A549 (cell line): ENCODE measurements at regions of chr19 and their contacts with region 1.

Region 1: DNA sequence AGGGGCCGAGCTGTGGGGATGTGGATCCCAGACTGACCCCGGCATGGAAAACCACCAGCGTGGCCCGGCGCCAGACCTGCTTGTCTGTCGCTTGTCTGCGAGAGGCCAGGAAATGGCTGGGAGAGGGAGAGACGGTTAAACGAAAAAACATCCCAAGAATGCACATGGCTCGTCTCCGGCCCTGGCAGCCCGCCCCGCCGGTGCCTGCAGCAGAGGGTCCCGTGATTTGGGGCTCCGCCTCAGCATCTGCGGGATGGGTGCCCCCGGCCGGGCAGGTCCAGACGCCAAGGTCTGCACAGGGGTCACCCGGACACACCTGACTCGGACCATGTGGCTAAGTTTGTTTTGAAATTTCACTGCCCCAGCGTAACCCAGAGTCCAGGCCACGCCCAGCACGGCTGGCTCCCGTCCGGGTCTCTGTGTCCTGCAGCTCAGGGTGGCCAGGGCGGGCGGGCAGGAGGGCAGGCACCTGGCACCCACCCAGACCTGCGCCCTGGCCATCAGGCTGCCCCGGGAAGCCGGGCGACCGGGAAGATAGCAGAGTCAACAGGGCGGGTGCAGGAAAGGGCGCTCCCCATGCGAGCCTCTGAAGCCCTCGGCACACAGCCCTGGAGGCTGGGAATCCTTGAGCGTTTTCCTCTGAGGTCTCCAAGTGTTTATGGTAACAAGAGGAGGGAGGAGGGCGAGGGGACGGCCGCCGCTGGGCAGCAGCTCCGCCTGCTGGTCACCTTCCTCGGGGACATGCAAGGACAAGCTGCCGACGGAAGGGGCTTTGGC is 103.2 kb downstream of the GADD45B start:
- DNase-seq: peak; percentile 74 to 94
- ATAC-seq: peak; percentile 88 to 92
- H3K4me3 ChIP-seq: peak overlapping the region; percentile 35
- H3K27ac ChIP-seq: peak overlapping the region; percentile 96
- H3K4me1 ChIP-seq: peaks cover 35% of the 10 kb centered on the region
- CTCF ChIP-seq: peak; percentile 82
- EP300 ChIP-seq: peak; percentile 27 to 69; a peak in 3 of 5 replicates
- POLR2A ChIP-seq: no peak
- RAD21 ChIP-seq: peak; percentile 91 to 93

Region 2: DNA sequence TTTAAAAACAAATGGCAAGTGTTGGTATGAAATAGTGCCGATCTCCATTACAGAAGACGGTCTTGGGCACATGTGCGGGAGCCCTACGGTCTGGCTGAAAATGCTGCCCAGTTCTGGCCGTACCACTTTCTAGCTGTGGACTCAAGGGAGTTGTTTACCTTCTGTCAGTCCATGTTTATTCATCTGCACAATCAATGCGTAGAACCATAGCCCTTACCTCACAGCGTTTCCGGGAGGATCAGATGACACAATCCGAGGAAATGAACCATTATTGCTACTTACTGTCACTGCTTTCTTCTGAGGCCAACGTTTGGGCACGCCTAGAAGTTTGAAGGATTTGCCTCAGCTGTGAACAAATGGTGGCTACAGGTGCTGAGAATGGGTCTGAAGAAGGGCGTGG is 72.0 kb before region 1 on chr19:
- CTCF ChIA-PET with region 1: interaction called, 10 read pairs
- POLR2A ChIA-PET with region 1: interaction called, 6 read pairs
- DNase-seq: peak; percentile 52 to 95
- ATAC-seq: peak; percentile 90 to 92
- H3K4me3 ChIP-seq: 0 out of 3 replicates have a peak overlapping the region, but pooled peaks have one; percentile 10
- H3K27ac ChIP-seq: peak overlapping the region; percentile 78 to 87
- H3K4me1 ChIP-seq: peaks cover 30% of the 10 kb centered on the region
- CTCF ChIP-seq: no peak
- EP300 ChIP-seq: peak; percentile 52 to 71; a peak in 2 of 5 replicates
- POLR2A ChIP-seq: no peak
- RAD21 ChIP-seq: no peak

Region 3: GRCh38 chr19:2537584-2538433 is 41.3 kb before region 1 on chr19:
- CTCF ChIA-PET with region 1: interaction called, 47 read pairs
- POLR2A ChIA-PET with region 1: interaction called, 35 read pairs
- DNase-seq: no peak
- ATAC-seq: no peak
- H3K4me3 ChIP-seq: no peak overlapping the region
- H3K27ac ChIP-seq: peak overlapping the region; percentile 40 to 97
- H3K4me1 ChIP-seq: peaks cover 62% of the 10 kb centered on the region
- CTCF ChIP-seq: no peak
- EP300 ChIP-seq: no peak
- POLR2A ChIP-seq: no peak
- RAD21 ChIP-seq: no peak

Region 4: DNA sequence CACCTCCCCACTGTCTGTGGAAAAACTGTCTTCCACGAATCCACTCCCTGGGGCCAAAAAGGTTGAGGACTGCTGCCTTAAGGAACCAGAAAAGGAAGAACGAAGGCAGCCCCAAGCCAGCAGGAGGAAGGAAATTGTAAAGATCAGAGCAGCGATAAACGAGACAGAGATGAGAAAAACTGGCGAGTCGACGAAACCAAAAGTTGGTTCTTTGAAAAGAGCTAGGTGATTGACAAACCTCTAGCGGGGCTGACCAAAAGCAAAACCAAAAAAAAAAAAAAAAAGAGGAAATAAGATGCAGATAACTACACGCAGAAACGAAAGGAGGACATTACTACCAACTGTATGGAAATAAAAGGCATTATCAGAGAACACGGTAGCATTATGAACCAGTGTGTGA is 26.2 kb before region 1 on chr19:
- CTCF ChIA-PET with region 1: interaction called, 11 read pairs
- POLR2A ChIA-PET with region 1: interaction called, 3 read pairs
- DNase-seq: no peak
- ATAC-seq: peak in 1 of 2 experiments; percentile 19; a peak in 2 of 6 replicates
- H3K4me3 ChIP-seq: peak overlapping the region; percentile 35
- H3K27ac ChIP-seq: peak overlapping the region; percentile 76 to 84
- H3K4me1 ChIP-seq: peaks cover 21% of the 10 kb centered on the region
- CTCF ChIP-seq: no peak
- EP300 ChIP-seq: no peak
- POLR2A ChIP-seq: no peak
- RAD21 ChIP-seq: no peak

Region 5: DNA sequence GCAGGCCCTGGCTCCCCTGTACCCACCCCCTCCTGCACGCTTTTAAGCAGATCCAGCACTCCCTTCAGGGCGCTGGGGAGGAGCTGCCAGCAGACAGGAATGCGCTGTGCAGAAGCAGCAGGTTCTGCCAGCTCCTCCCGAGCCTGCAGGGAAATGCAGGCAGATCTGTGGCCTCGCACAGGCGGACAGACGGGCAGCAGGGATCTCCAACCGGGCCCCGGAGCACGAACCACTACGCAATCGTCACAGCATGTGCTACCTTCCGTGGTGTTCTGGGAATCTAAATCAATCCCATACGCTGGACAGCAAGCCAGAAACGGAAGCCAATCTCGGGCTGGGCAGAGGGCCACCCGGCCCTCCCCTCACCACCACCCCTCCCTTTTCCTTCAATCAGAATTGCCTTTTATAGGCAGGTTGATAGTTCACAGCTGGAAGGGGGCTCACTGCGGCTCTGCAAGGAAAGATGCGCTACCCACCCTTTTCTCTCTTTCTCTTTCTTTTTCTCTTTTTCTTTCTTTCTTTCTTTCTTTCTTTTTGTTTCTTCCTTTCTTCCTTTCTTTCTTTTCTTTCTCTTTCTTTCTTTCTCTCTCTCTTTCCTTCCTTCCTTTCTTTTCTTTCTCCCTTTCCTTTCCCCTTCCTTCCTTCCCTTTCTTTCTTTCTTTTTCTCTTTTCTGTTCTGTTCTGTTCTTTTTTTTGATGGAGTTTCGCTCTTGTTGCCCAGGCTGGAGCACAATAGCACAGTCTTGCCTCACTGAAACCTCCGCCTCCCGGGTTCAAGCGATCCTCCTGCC is 23.5 kb after region 1 on chr19:
- CTCF ChIA-PET with region 1: interaction called, 12 read pairs
- POLR2A ChIA-PET with region 1: interaction called, 8 read pairs
- DNase-seq: no peak
- ATAC-seq: no peak
- H3K4me3 ChIP-seq: no peak overlapping the region
- H3K27ac ChIP-seq: peak overlapping the region in 1 of 2 experiments; percentile 55; a peak in 2 of 6 replicates
- H3K4me1 ChIP-seq: peaks cover 6% of the 10 kb centered on the region; the same call in 1 of the 3 replicates
- CTCF ChIP-seq: no peak
- EP300 ChIP-seq: no peak
- POLR2A ChIP-seq: no peak
- RAD21 ChIP-seq: no peak